ENCODE measurements at regions of chr2 and their contacts with region 1.

Region 1: DNA sequence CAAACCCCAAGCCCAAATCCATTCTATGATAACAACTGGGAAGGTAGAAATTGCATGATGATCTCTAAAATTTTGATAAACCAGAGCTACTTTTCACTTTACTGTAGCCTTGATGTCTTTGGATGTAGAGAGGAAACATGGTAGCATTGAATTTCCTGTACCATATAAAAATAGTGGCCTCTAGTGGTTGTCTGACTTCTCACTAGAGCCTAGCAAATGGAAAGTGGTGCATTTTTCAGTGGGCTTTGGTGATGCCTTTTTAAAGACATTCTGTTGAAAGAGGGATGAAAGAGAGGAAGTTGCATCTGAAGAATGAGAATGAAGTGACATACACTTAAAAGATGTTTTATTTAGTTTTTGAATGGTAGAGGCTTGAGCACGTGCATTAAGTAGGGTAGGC is 662.2 kb downstream of the XIRP2 start:
- DNase-seq: no peak
- H3K4me3 ChIP-seq: no peak overlapping the region
- H3K27ac ChIP-seq: no peak overlapping the region
- H3K4me1 ChIP-seq: no peaks in the 10 kb centered on the region
- H3K27me3 ChIP-seq: no peaks in the 10 kb centered on the region
- CTCF ChIP-seq: no peak

Region 2: GRCh38 chr2:167264380-167264779 is 286.1 kb before region 1 on chr2:
- intact Hi-C with region 1: loop called (anchors 10 kb)
- DNase-seq: peak; percentile 23
- H3K4me3 ChIP-seq: no peak overlapping the region
- H3K27ac ChIP-seq: no peak overlapping the region
- H3K4me1 ChIP-seq: no peaks in the 10 kb centered on the region
- H3K27me3 ChIP-seq: no peaks in the 10 kb centered on the region
- CTCF ChIP-seq: peak; percentile 42